ENCODE measurements at regions of chr5 and their contacts with region 1.

Region 1: DNA sequence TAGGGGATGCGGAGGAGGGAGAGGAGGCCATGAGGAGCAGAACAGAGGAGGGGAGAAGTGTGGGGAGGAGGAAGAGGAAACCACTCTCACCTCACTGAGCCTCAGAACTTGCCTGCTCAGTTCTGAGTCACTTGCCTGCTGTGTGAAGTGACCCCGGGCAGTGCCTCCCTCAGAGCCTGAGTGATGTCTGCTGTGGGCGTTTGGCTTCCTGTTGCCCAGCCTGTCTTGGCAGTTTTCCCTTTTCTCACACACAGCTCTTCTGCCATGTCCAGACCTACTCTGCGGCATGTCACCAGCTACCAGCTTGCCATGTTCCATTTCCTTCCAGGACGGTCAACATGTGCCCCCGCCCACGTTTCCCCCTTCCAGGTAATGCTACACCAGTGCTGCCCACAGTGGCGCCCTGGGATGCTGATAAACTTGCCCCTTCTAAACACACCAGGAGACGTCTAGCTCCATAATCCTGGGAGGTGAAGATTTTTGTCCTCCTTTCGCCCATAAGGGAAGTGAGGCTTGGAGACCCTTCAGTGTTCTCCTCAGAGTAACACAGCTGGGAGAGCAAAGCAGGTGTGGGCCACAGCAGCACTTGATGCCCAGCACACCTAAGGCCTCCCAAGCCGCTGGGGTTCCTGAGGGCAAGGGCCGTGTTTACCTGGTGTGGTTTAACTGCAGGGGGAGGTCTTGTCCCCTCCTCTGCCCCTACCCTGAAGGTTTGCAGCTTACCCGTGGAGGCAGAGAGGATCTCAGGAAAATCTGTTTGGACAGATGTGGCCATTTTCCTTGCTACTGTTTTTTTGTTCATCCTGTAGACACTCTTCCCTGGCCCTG is 63.8 kb upstream of the RNF130 start:
- DNase-seq: no peak
- ATAC-seq: peak in 2 of 8 donors; percentile 34 to 35
- H3K4me3 ChIP-seq: no peak overlapping the region
- H3K27ac ChIP-seq: peak overlapping the region in 1 of 10 donors; percentile 14
- H3K4me1 ChIP-seq: peaks cover 0 to 5% (median 0%) of the 10 kb centered on the region in 9 donors
- H3K27me3 ChIP-seq: peaks cover 0 to 25% (median 13%) of the 10 kb centered on the region in 7 donors
- CTCF ChIP-seq: no peak

Region 2: GRCh38 chr5:180209137-180209581 is 73.8 kb after region 1 on chr5 and contains the start of gene RASGEF1C:
- intact Hi-C with region 1: loop called in 1 of 10 experiments (anchors 10 kb)
- DNase-seq: peak in 1 of 2 donors; percentile 68
- ATAC-seq: peak; percentile 63 to 93 (median 74)
- H3K4me3 ChIP-seq: peak within 1 kb of the TSS in 9 of 10 donors; percentile 12 to 41 (median 36)
- H3K27ac ChIP-seq: no peak within 1 kb of the TSS
- H3K4me1 ChIP-seq: peaks cover 0 to 9% (median 5%) of the 10 kb centered on the region in 9 donors
- H3K27me3 ChIP-seq: peaks cover 10 to 69% (median 43%) of the 10 kb centered on the region in 7 donors
- CTCF ChIP-seq: peak in 6 of 9 donors; percentile 12 to 52 (median 34)
- total RNA-seq, gene RASGEF1C: 0.17 to 0.44 (median 0.24) TPM in 4 of 10 donors, not detected in the others